ENCODE measurements at regions of chr12 and their contacts with region 1.

Region 1: GRCh38 chr12:46217541-46218321 is 51.1 kb downstream of the SLC38A1 start:
- DNase-seq: peak in 8 of 9 experiments; percentile 44 to 88 (median 66)
- ATAC-seq: peak; percentile 11
- H3K4me3 ChIP-seq: peak overlapping the region; percentile 34 to 47
- H3K4me3 Mint-ChIP-seq: peak overlapping the region; percentile 79
- H3K27ac ChIP-seq: peak overlapping the region; percentile 83 to 92
- H3K27ac Mint-ChIP-seq: peak overlapping the region; percentile 98
- H3K4me1 ChIP-seq: peaks cover 98% of the 10 kb centered on the region
- H3K4me1 Mint-ChIP-seq: peaks cover 96% of the 10 kb centered on the region
- H3K27me3 ChIP-seq: no peaks in the 10 kb centered on the region
- H3K27me3 Mint-ChIP-seq: no peaks in the 10 kb centered on the region
- CTCF ChIP-seq: no peak

Region 2: GRCh38 chr12:45439039-45439438 is 778.7 kb before region 1 on chr12:
- CTCF ChIA-PET with region 1: no interaction called
- POLR2A ChIA-PET with region 1: no interaction called
- intact Hi-C with region 1: no loop called
- DNase-seq: no peak
- ATAC-seq: no peak
- H3K4me3 ChIP-seq: no peak overlapping the region
- H3K4me3 Mint-ChIP-seq: no peak overlapping the region
- H3K27ac ChIP-seq: no peak overlapping the region
- H3K27ac Mint-ChIP-seq: no peak overlapping the region
- H3K4me1 ChIP-seq: no peaks in the 10 kb centered on the region
- H3K4me1 Mint-ChIP-seq: no peaks in the 10 kb centered on the region
- H3K27me3 ChIP-seq: no peaks in the 10 kb centered on the region
- H3K27me3 Mint-ChIP-seq: no peaks in the 10 kb centered on the region
- CTCF ChIP-seq: no peak

Region 3: DNA sequence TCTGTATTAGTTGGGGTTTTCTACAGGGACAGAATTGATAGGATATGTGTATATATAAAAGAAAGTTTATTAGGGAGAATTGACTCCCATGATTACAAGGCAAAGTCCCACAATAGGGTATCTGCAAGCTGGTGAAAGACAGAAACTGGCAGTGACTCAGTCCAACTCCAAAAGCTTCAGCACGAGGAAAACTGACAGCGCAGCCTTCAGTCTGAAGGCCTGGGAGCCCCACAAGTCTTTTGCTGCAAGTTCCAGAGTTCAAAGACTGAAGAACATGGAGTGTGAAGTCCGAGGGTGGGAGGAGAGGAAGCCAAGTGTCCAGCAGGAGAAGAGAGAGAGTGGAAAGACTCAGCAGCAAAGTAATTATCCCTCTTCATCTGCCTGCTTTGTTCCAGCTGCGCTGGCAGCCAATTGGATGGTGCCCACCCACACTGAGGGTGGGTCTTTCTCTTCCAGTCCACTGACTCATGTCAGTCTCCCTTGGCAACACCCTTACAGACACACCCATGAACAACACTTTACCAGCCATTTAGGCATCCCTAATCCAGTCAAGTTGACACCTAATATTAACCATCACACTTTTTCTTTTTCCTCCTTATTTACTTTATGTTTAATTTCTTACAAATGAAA is 116.8 kb before region 1 on chr12:
- CTCF ChIA-PET with region 1: no interaction called
- POLR2A ChIA-PET with region 1: no interaction called
- intact Hi-C with region 1: no loop called
- DNase-seq: no peak
- ATAC-seq: no peak
- H3K4me3 ChIP-seq: no peak overlapping the region
- H3K4me3 Mint-ChIP-seq: no peak overlapping the region
- H3K27ac ChIP-seq: no peak overlapping the region
- H3K27ac Mint-ChIP-seq: no peak overlapping the region
- H3K4me1 ChIP-seq: no peaks in the 10 kb centered on the region
- H3K4me1 Mint-ChIP-seq: no peaks in the 10 kb centered on the region
- H3K27me3 ChIP-seq: no peaks in the 10 kb centered on the region
- H3K27me3 Mint-ChIP-seq: peaks cover 2% of the 10 kb centered on the region
- CTCF ChIP-seq: no peak

Region 4: DNA sequence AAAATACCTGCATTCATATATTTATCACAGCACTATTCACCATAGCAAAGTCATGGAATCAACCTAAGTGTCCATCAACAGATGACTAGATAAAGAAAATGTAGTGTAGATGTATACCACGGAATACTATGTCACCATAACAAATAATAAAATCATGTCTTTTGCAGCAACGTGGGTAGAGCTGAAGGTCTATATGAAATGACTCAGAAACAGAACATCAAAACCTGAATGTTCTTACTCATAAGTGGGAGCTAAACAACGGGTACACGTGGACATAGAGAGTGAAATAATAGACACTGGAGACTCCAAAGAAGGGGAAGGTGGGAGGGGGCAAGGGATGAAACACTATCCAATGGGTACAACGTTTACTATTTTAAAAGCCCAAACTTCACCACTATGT is 13.3 kb after region 1 on chr12:
- CTCF ChIA-PET with region 1: interaction called, 3 read pairs
- POLR2A ChIA-PET with region 1: interaction called, 13 read pairs
- intact Hi-C with region 1: loop called in 1 of 2 experiments (anchors 2 kb)
- DNase-seq: no peak
- ATAC-seq: peak; percentile 41
- H3K4me3 ChIP-seq: no peak overlapping the region
- H3K4me3 Mint-ChIP-seq: no peak overlapping the region
- H3K27ac ChIP-seq: peak overlapping the region in 1 of 2 experiments; percentile 29
- H3K27ac Mint-ChIP-seq: peak overlapping the region; percentile 12
- H3K4me1 ChIP-seq: peaks cover 42% of the 10 kb centered on the region
- H3K4me1 Mint-ChIP-seq: peaks cover 83% of the 10 kb centered on the region
- H3K27me3 ChIP-seq: no peaks in the 10 kb centered on the region
- H3K27me3 Mint-ChIP-seq: no peaks in the 10 kb centered on the region
- CTCF ChIP-seq: no peak